Upper lobe of right lung (tissue), 1 donor: ENCODE measurements at regions of chr10 and their contacts with region 1.

Region 1: GRCh38 chr10:93554760-93555432 is 11.6 kb upstream of the FFAR4 start:
- DNase-seq: peak; percentile 86
- ATAC-seq: peak; percentile 91
- H3K4me3 ChIP-seq: no peak overlapping the region
- H3K27ac ChIP-seq: no peak overlapping the region
- H3K4me1 ChIP-seq: no peaks in the 10 kb centered on the region
- H3K27me3 ChIP-seq: no peaks in the 10 kb centered on the region
- CTCF ChIP-seq: peak; percentile 69

Region 2: DNA sequence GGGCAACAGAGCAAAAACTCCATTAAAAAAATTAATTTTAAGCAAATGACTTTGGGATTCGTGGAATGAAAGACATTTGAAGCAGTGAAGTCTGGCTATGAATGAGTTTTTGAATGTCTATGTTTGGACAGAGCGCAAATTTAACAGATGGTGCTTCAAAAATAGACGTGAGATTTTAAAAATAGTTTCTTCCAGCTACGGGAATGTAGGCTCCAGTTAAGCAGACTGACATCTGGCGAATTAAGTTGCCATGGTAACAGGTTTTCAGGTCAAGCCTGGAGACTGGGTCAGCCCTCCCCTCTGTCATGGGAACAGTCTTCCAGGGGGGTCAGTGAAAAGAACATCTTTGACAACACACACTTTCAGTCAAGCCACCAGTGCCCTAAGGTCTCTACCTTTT is 134.8 kb before region 1 on chr10:
- intact Hi-C with region 1: no loop called
- DNase-seq: no peak
- ATAC-seq: no peak
- H3K4me3 ChIP-seq: no peak overlapping the region
- H3K27ac ChIP-seq: no peak overlapping the region
- H3K4me1 ChIP-seq: peaks cover 28% of the 10 kb centered on the region
- H3K27me3 ChIP-seq: no peaks in the 10 kb centered on the region
- CTCF ChIP-seq: no peak

Region 3: DNA sequence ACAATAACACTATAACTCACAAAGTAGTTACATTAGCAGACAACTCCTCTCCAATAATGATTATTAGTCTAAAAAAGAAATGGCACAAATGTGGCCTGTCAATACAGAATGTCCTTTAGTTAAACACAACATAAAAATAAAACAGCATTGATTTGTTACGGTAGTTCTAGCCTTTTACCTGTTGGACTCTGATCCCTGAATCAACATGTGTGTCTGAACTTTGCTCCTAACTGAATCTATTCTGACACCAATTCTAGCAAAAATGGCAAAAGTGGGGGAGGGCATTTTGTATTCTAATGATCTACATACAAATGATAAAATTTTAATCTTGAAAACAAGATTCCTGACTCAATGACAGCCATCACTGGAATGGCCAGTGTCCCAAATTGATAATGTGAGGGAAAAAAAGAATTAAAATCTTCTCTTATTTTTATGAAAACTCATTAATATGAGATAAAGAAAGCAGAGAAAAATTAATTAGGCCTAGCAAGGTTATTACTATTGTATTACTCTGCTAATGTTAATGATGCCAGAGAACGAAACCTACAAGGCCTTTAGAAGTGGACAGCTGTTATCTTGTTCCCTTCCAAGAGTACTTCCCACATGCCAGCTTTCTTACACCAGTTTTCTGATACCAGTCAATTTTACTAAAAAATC is 117.3 kb after region 1 on chr10:
- intact Hi-C with region 1: loop called (anchors 10 kb)
- DNase-seq: no peak
- ATAC-seq: no peak
- H3K4me3 ChIP-seq: no peak overlapping the region
- H3K27ac ChIP-seq: no peak overlapping the region
- H3K4me1 ChIP-seq: no peaks in the 10 kb centered on the region
- H3K27me3 ChIP-seq: no peaks in the 10 kb centered on the region
- CTCF ChIP-seq: no peak